ENCODE measurements at regions of chr15 and their contacts with region 1.

Region 1: DNA sequence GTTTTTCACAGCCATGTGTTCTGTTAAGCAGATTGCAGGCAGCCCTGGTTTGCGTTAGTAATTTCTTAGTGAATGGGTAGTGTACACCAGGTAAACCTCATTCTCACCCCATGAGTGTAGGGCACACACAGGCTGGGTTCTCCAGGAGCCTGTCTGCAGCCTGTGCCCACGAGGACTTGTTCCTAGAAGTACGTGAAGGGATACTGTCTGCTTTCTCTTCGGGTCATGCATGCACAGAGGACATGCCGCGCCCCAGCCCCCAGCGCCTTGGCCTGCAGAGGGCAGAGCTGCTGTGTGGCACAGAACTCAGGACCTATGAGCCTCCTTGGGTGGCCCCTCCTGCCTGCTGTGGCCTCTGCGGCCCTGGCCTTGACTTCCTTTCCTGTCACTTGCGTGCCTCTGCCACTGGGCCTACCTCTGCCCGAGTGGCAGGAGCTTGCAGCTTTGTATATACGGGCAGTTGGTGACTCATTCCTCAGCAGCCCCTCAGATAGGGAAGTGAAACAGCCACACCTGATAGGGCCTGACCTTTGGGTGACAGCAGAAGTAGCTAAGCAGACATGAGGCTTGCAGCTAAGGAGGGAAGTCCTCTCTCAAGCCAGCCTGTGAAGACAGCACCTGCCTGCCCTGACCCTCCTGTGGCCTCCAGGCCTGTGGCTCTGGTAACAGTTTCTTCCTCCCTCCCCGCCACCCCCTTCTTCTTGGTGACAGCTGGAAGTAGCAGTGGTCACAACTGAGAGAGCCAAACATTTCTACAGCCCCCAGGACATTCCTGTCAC is 19.5 kb downstream of the PPCDC start:
- DNase-seq: peak; percentile 76
- H3K4me3 Mint-ChIP-seq: peak overlapping the region; percentile 18
- H3K27ac Mint-ChIP-seq: peak overlapping the region; percentile 87
- H3K4me1 Mint-ChIP-seq: peaks cover 75% of the 10 kb centered on the region
- H3K27me3 Mint-ChIP-seq: no peaks in the 10 kb centered on the region

Region 2: DNA sequence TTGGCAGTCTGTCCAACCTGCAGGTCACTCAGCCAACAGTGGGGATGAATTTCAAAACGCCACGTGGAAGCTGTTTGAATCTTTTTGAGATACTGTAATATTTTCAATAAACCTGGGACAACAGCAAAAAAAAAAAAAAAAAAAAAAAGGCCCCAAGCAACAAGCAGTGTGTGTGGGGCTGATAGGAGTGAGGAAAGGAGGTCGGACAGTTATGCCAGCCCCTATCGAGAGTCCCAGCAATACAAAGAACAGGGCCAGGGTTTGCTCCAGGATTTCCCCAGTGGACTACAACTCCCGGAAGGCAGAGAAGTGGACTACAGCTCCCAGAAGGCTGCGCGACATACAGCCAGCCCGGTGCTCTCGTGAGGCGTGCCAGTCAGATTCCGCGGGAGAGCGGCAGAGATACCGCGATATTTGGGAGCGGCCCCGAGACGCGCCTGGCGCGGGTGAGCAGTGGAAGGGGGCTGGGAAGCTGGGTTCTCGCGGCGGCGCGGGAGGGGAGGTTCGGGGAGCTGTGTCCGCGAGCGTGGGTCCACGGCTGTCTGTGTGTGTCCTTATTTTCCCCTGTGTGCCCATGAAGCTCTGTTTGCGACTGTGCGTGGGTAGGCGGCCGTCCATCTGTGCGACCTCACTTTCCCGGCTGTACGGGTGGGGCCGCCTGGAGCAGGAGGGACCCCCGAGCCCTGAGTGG is 19.6 kb before region 1 on chr15 and contains the start of gene PPCDC:
- CTCF ChIA-PET with region 1: interaction called, 14 read pairs
- POLR2A ChIA-PET with region 1: interaction called, 3 read pairs
- DNase-seq: peak; percentile 97
- H3K4me3 Mint-ChIP-seq: peak within 1 kb of the TSS; percentile 97
- H3K27ac Mint-ChIP-seq: peak within 1 kb of the TSS; percentile 99
- H3K4me1 Mint-ChIP-seq: peaks cover 32% of the 10 kb centered on the region
- H3K27me3 Mint-ChIP-seq: no peaks in the 10 kb centered on the region
- total RNA-seq, gene PPCDC: 19.6 to 20.7 TPM

Region 3: DNA sequence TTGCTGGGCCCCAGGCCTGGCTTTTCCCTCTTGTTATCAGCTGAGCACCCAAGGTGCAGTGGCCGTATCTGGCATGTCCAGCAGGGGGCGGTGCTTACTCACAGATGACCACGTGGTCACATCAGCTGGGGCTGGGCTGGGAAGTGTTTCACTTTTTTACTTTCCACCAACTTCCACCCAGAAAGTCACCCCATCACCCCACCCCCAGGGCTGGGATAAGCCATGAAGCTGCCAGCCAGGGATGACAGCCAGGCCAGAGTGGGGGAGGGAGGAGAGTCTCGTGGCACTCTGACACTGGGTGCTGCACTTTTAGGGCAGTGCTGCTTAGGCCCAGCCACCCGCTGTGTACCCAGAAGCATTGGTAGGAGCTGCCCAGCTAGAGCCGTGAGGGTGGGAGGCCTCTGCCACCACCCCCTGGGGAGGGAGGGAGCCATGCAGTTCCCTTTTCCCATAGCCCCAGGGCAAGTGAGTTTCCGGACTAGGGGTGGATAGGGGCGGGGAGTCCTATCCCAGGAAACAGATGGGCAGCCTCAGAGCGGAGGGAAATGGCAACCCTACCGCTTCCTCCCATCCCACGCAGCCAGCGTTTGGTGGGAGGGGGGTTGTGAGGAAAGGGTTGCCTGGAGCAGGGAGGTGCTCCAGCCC is 13.4 kb before region 1 on chr15:
- CTCF ChIA-PET with region 1: interaction called, 23 read pairs
- POLR2A ChIA-PET with region 1: no interaction called
- DNase-seq: peak; percentile 92
- H3K4me3 Mint-ChIP-seq: no peak overlapping the region
- H3K27ac Mint-ChIP-seq: no peak overlapping the region
- H3K4me1 Mint-ChIP-seq: peaks cover 54% of the 10 kb centered on the region
- H3K27me3 Mint-ChIP-seq: no peaks in the 10 kb centered on the region

Region 4: DNA sequence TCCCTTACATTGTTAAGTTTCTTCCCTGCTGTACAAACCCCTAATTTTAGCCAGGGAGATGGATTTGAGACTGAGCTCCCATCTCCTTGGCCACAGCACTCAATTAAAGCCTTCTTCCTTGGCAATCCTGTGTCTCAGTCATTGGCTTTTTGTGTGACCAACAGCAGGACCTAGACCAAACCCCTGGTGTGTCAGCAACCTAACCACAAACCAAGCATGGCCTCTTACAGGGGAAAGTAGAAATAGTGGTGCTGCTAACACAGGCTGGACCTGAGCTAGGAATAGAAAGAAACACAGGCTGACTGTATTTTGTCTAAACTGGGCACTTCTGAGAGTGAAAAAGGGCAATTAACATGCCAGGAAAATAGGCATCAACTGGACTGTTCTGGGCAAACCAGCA is 18.4 kb after region 1 on chr15:
- CTCF ChIA-PET with region 1: interaction called, 21 read pairs
- POLR2A ChIA-PET with region 1: no interaction called
- DNase-seq: no peak
- H3K4me3 Mint-ChIP-seq: no peak overlapping the region
- H3K27ac Mint-ChIP-seq: no peak overlapping the region
- H3K4me1 Mint-ChIP-seq: peaks cover 34% of the 10 kb centered on the region
- H3K27me3 Mint-ChIP-seq: no peaks in the 10 kb centered on the region

Region 5: GRCh38 chr15:75069301-75069925 is 26.5 kb after region 1 on chr15:
- CTCF ChIA-PET with region 1: interaction called, 21 read pairs
- POLR2A ChIA-PET with region 1: interaction called, 4 read pairs
- DNase-seq: no peak
- H3K4me3 Mint-ChIP-seq: no peak overlapping the region
- H3K27ac Mint-ChIP-seq: peak overlapping the region; percentile 37
- H3K4me1 Mint-ChIP-seq: peaks cover 58% of the 10 kb centered on the region
- H3K27me3 Mint-ChIP-seq: no peaks in the 10 kb centered on the region

Measured in activated CD4-positive, alpha-beta T cell treated with anti-CD3 and anti-CD28 coated beads, Interleukin-2, amount 10 ng/mL, durations not matched to agents 7 days and 5 days (primary cell).